ENCODE measurements at regions of chr14 and their contacts with region 1.

Region 1: DNA sequence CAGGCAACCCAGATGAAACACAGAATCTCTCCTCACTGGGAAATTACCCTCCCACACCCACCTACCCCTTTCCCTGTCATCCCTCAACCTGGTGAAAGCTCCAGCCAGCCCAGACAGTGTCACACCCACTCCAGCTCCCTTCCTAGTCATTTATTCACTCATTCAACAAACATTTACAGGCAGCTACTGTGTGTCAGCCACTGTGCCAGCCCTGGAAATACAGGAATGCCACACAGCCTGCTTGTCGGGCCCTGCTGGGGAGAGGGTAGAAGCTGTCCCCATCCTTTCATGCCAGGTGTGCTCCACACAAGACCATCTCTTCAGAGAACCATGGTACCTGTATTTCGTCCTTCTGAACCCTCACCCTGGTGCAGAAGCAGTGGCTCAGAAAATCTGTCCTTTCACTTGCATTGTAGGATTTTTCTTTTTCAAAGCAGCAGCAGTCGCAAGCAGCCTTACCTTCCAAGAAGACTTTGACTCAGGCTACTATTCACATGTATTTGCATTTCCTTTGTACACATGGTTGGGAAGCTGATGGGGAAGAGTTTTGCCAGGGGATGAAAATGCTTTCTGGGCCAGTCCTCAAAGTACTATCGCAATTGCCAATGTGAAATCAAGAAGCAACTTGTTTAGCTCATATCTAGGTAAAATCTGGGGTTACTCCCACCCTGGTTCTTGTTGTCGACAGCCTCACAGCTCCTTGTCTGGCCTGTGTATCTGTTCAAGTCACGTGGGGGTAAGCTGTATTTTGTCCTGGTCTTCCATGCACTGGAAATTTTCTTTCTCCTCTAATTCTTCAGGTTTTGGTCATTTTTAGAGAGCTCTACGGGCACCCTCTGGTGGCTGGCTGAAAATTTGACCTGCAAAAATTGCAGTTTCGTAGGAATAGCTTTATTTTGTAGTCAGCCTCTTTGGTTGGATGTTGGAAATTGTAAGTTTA is 147.4 kb upstream of the EGLN3 start:
- DNase-seq: peak; percentile 71
- H3K4me3 Mint-ChIP-seq: no peak overlapping the region
- H3K27ac Mint-ChIP-seq: peak overlapping the region; percentile 2
- H3K4me1 Mint-ChIP-seq: peaks cover 20% of the 10 kb centered on the region
- H3K27me3 Mint-ChIP-seq: no peaks in the 10 kb centered on the region
- CTCF ChIP-seq: peak; percentile 51

Region 2: DNA sequence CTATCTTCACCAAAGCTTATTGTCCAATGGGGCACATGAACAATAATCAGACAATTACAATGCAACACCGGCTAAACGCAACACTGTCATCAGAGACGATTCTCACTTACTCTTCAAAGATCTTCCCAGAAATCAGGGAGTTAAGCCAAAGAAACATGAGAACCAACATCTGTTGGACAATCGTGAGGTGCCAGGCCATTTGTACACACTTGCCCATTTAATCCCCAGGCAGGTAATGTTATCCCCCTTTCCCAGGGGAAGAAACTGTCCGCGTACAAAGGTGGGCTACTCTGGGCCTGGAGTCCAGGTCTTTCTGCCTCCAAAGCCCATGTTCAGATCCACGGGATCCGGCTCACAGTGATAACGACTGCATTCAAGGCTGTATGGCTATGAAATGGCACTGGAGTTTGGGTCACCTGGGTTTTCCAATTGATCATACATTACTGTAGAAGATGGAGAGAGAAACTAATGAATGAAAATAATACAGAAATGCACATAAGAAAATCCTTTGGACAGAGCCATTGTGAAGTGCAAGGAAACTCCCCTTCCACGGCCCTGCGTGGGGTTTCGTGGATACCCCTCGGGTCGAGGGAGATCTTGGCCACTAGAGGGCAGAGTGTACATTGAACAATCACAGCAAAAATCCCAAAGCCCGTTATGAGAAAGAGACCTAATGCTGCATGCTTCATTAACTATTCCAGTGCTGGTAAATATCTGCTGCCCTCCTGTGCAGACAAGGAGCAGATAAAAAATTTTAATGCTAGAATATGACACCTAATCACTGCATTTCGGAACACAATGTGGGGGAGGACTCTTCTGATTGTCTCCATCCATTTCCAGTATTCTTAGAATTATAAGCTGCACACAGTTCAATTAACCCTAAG is 258.9 kb before region 1 on chr14:
- CTCF ChIA-PET with region 1: interaction called, 13 read pairs
- intact Hi-C with region 1: loop called (anchors 1 kb)
- DNase-seq: peak; percentile 46
- H3K4me3 Mint-ChIP-seq: no peak overlapping the region
- H3K27ac Mint-ChIP-seq: no peak overlapping the region
- H3K4me1 Mint-ChIP-seq: no peaks in the 10 kb centered on the region
- H3K27me3 Mint-ChIP-seq: no peaks in the 10 kb centered on the region
- CTCF ChIP-seq: peak; percentile 80

Region 3: GRCh38 chr14:33914676-33915516 is 183.4 kb before region 1 on chr14:
- CTCF ChIA-PET with region 1: no interaction called
- intact Hi-C with region 1: loop called (anchors 5 kb)
- DNase-seq: peak; percentile 68
- H3K4me3 Mint-ChIP-seq: no peak overlapping the region
- H3K27ac Mint-ChIP-seq: peak overlapping the region; percentile 45
- H3K4me1 Mint-ChIP-seq: peaks cover 25% of the 10 kb centered on the region
- H3K27me3 Mint-ChIP-seq: no peaks in the 10 kb centered on the region
- CTCF ChIP-seq: no peak

Region 4: DNA sequence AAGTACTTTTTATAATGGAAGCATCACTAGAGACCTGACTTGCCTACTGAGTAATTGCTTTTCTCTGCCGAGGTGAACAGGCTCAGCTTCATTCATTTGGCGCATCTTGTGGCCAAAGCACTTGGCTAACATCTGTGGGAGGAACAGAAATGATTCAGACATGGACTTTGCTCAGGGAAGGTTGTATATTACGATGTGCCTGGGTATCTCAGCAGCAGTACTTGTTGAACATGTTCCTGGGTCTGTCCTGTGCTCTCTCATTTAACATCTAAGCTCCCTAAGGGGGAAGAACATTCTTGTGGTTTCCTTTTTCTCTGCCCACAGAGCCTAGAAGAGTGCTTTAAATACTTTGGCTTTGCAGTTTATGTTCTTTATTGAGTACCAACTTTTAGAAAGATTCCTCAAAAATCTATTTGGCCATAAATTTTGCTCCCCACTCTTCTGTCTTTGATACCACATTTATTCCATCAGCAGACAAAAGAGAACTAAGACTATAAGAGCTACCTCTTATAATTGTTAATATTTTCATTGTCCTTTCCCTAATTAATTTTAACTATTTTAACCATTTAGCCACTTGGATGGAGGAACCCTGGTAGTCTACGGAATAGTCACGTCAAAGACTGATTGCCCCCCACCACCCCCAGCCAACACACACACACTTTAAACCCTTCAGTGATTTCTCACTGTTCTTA is 46.2 kb before region 1 on chr14:
- CTCF ChIA-PET with region 1: interaction called, 10 read pairs
- intact Hi-C with region 1: loop called (anchors 2 kb)
- DNase-seq: peak; percentile 67
- H3K4me3 Mint-ChIP-seq: peak overlapping the region; percentile 19
- H3K27ac Mint-ChIP-seq: peak overlapping the region; percentile 60
- H3K4me1 Mint-ChIP-seq: peaks cover 45% of the 10 kb centered on the region
- H3K27me3 Mint-ChIP-seq: no peaks in the 10 kb centered on the region
- CTCF ChIP-seq: no peak

Region 5: GRCh38 chr14:34081576-34082136 is 16.7 kb before region 1 on chr14:
- CTCF ChIA-PET with region 1: interaction called, 18 read pairs
- intact Hi-C with region 1: no loop called
- DNase-seq: peak; percentile 42
- H3K4me3 Mint-ChIP-seq: peak overlapping the region; percentile 29
- H3K27ac Mint-ChIP-seq: peak overlapping the region; percentile 47
- H3K4me1 Mint-ChIP-seq: peaks cover 27% of the 10 kb centered on the region
- H3K27me3 Mint-ChIP-seq: no peaks in the 10 kb centered on the region
- CTCF ChIP-seq: no peak

Region 6: GRCh38 chr14:34227834-34228649 is 129.7 kb after region 1 on chr14:
- CTCF ChIA-PET with region 1: interaction called, 8 read pairs
- intact Hi-C with region 1: loop called (anchors 1 kb)
- DNase-seq: peak; percentile 75
- H3K4me3 Mint-ChIP-seq: no peak overlapping the region
- H3K27ac Mint-ChIP-seq: no peak overlapping the region
- H3K4me1 Mint-ChIP-seq: peaks cover 43% of the 10 kb centered on the region
- H3K27me3 Mint-ChIP-seq: no peaks in the 10 kb centered on the region
- CTCF ChIP-seq: peak; percentile 63